ENCODE measurements at regions of chr12 and their contacts with region 1.

Region 1: DNA sequence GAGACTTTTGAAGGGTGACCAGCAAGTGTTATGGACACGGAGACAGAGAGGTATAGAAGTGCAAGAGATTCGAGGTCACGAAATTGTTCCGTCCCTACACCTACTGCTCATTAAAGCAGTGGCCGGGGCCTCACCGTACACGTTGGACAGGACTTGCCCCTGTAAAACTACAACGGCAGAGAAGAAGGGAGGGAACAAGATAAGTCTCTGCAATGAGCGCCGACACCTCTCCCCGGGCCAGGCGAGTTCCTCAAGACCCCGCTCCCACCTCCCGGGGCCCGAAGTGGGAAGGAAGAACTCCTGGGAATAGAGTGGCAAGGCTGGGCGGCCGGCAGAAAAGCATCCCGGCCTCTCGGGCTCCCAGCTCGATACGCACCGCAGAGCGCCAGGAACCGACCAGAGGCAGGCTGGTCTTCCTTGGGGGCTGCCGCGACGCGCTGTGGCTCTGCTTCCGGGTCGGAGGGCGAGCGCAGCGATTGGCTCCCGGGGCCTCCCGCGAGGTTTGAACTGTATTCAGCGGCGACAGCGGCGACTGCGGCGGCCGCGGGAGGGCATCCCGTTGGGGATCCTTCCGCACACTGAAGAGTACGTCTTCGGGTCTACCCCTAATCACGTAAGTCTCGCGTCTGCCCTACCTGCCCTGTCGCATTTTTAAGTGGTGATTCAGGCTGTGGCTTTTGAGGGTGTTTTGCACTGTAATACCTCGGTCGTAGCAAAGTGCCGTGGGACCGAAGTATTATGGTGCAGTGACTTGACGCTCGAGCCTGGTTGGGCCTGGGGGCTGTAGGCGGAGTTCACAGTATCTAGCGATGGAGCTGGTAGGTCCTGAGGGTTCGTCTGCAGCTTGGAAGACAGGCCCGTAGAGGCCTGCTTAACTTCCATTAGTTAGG is at the starts of genes NUP37 and PARPBP:
- DNase-seq: peak; percentile 90
- ATAC-seq: peak; percentile 98
- H3K4me3 Mint-ChIP-seq: peak within 1 kb of the TSS; percentile 95
- H3K27ac Mint-ChIP-seq: peak within 1 kb of the TSS; percentile 91
- H3K4me1 Mint-ChIP-seq: peaks cover 12% of the 10 kb centered on the region
- H3K27me3 Mint-ChIP-seq: no peaks in the 10 kb centered on the region
- CTCF ChIP-seq: no peak
- total RNA-seq, gene NUP37: 27.0 and 29.9 TPM in 2 replicates
- total RNA-seq, gene PARPBP: 4.6 and 5.0 TPM in 2 replicates

Region 2: DNA sequence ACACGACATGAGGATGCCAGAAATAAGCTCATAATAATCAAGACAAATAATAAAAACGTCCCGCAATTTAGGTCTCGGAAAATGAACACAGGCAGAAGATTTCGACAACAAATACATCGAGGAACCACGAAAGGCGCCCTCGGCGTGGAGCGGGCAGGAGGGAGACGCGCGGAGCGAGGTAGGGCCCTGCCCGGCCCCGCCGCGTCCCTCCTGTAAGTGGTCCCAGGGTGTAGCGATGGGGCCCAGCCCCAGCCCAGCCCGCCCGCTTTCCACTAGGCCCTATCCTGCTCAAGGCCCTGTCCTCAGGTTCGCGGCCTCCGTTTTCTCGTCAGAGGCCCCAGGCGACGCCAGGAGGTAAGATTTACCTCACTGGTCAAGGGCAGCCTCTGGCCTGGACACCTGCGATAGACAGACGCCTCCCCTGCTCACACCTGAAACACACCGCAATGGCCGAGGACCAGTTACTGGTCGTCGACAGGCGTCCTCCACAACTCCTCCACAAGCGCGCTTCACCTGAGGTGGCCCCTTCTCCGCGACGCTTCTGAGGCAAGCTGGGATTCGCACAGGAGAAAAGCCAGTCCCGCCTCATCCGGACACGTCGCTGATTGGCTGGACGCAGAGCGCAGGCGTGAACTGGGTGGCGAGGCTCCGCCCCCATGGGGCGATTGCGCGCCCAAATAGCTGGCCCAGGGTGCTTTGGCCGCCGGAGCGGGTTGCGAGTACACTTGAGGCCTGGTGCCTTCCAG is 380.8 kb before region 1 on chr12 and contains the start of gene SYCP3:
- CTCF ChIA-PET with region 1: no interaction called
- POLR2A ChIA-PET with region 1: no interaction called
- intact Hi-C with region 1: no loop called
- DNase-seq: no peak
- ATAC-seq: no peak
- H3K4me3 Mint-ChIP-seq: no peak within 1 kb of the TSS
- H3K27ac Mint-ChIP-seq: no peak within 1 kb of the TSS
- H3K4me1 Mint-ChIP-seq: peaks cover 31% of the 10 kb centered on the region
- H3K27me3 Mint-ChIP-seq: no peaks in the 10 kb centered on the region
- CTCF ChIP-seq: no peak
- total RNA-seq, gene SYCP3: 0.17 and 0.49 TPM in 2 replicates

Region 3: GRCh38 chr12:102010265-102010994 is 109.5 kb before region 1 on chr12:
- CTCF ChIA-PET with region 1: no interaction called
- POLR2A ChIA-PET with region 1: no interaction called
- intact Hi-C with region 1: loop called (anchors 1 kb)
- DNase-seq: peak; percentile 23
- ATAC-seq: peak; percentile 96
- H3K4me3 Mint-ChIP-seq: peak overlapping the region; percentile 63
- H3K27ac Mint-ChIP-seq: peak overlapping the region; percentile 96
- H3K4me1 Mint-ChIP-seq: peaks cover 33% of the 10 kb centered on the region
- H3K27me3 Mint-ChIP-seq: no peaks in the 10 kb centered on the region
- CTCF ChIP-seq: no peak

Measured in activated B cell treated with CpG ODN at 0.5 μM for 24 hours (primary cell).